H1 (cell line): ENCODE measurements at regions of chr9 and their contacts with region 1.

Region 1: GRCh38 chr9:107425101-107426045 is 64.2 kb downstream of the KLF4 start:
- DNase-seq: peak; percentile 54 to 95
- H3K4me3 ChIP-seq: peak overlapping the region in 1 of 4 experiments; percentile 19; a peak in 3 of 8 replicates
- H3K27ac ChIP-seq: no peak overlapping the region
- H3K4me1 ChIP-seq: no peaks in the 10 kb centered on the region; a peak in 1 of 7 replicates
- H3K27me3 ChIP-seq: peaks cover 0 to 8% (median 7%) of the 10 kb centered on the region in 4 experiments; a peak in 3 of 7 replicates
- CTCF ChIP-seq: peak; percentile 69 to 98 (median 92)
- EP300 ChIP-seq: no peak
- POLR2A ChIP-seq: no peak
- RAD21 ChIP-seq: peak; percentile 59 to 64

Region 2: GRCh38 chr9:107438211-107439090 is 13.1 kb after region 1 on chr9:
- CTCF ChIA-PET with region 1: interaction called, 50 read pairs
- POLR2A ChIA-PET with region 1: interaction called, 6 read pairs
- DNase-seq: peak; percentile 61 to 65
- H3K4me3 ChIP-seq: peak overlapping the region in 2 of 4 experiments; percentile 7 to 28; a peak in 1 of 8 replicates
- H3K27ac ChIP-seq: peak overlapping the region; percentile 87
- H3K4me1 ChIP-seq: peaks cover 6 to 8% (median 7%) of the 10 kb centered on the region in 4 experiments; a peak in 4 of 7 replicates
- H3K27me3 ChIP-seq: no peaks in the 10 kb centered on the region
- CTCF ChIP-seq: no peak
- EP300 ChIP-seq: peak in 1 of 2 experiments; percentile 91; a peak in 1 of 3 replicates
- POLR2A ChIP-seq: peak; percentile 48 to 65; a peak in 2 of 3 replicates
- RAD21 ChIP-seq: no peak

Region 3: GRCh38 chr9:107465467-107466451 is 40.4 kb after region 1 on chr9:
- CTCF ChIA-PET with region 1: interaction called, 33 read pairs
- POLR2A ChIA-PET with region 1: interaction called, 4 read pairs
- DNase-seq: peak in 1 of 2 experiments; percentile 80
- H3K4me3 ChIP-seq: peak overlapping the region; percentile 47 to 75 (median 58)
- H3K27ac ChIP-seq: no peak overlapping the region
- H3K4me1 ChIP-seq: peaks cover 0 to 5% (median 5%) of the 10 kb centered on the region in 4 experiments; a peak in 4 of 7 replicates
- H3K27me3 ChIP-seq: peaks cover 0 to 19% (median 17%) of the 10 kb centered on the region in 4 experiments; a peak in 6 of 7 replicates
- CTCF ChIP-seq: peak; percentile 73 to 79 (median 76)
- EP300 ChIP-seq: no peak
- POLR2A ChIP-seq: no peak
- RAD21 ChIP-seq: peak; percentile 83 to 87

Region 4: DNA sequence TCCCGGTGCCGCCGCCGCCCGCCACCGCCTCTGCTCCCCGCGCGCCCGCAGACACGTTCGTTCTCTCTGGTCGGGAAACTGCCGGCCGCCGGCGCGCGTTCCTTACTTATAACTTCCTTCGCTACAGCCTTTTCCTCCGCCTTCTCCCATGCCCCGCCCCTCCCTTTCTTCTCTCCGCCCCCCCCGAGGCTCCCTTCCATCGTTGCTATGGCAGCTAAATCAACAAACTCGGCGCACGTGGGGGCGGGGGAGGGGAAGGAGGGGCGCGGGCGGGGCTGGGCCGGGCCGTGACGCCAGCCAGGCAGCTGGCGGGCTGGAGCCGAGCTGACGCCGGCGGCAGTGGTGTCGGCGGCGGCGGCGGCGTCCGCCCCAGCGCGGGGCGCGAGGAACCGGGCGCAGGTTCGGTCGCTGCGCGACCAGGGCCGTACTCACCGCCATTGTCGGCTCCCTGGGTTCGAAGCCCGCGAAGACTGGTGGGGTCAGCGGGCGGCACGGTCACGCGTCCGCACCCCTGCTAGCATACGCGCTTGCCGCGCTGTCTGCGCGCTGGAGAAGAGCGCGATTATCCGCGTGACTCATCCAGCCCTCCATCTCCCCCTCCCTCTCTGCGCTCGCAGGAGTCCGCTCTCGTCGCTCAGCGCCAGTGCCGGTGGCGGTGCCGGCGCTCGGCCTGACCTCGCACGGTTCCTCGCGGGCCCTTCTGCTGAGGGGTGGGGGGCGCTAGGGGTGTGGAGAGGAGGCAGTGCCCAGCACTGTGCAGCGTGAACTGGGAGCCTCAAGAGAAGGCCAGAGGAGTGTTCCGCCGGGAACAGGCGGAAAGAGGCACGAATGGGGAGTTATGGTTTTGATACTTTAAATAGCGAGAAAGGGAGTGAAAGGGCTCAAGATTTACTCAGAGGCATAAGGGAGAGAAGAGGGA is 64.6 kb after region 1 on chr9 and contains the start of gene KLF4:
- CTCF ChIA-PET with region 1: interaction called, 23 read pairs
- POLR2A ChIA-PET with region 1: interaction called, 5 read pairs
- DNase-seq: peak; percentile 73 to 84
- H3K4me3 ChIP-seq: peak within 1 kb of the TSS; percentile 50 to 69 (median 60)
- H3K27ac ChIP-seq: 0 out of 2 replicates have a peak within 1 kb of the TSS, but pooled peaks have one; percentile 55
- H3K4me1 ChIP-seq: peaks cover 0 to 22% (median 13%) of the 10 kb centered on the region in 4 experiments; a peak in 6 of 7 replicates
- H3K27me3 ChIP-seq: peaks cover 21 to 55% (median 48%) of the 10 kb centered on the region in 4 experiments
- CTCF ChIP-seq: no peak
- EP300 ChIP-seq: no peak
- POLR2A ChIP-seq: no peak; a peak in 2 of 3 replicates
- RAD21 ChIP-seq: no peak; a peak in 1 of 4 replicates
- total RNA-seq, gene KLF4: 2.8 and 3.1 TPM in 2 replicates

Region 5: GRCh38 chr9:108565651-108566378 is 1140.4 kb after region 1 on chr9:
- CTCF ChIA-PET with region 1: interaction called, 42 read pairs
- POLR2A ChIA-PET with region 1: no interaction called
- DNase-seq: peak in 1 of 2 experiments; percentile 31
- H3K4me3 ChIP-seq: no peak overlapping the region
- H3K27ac ChIP-seq: no peak overlapping the region
- H3K4me1 ChIP-seq: no peaks in the 10 kb centered on the region
- H3K27me3 ChIP-seq: no peaks in the 10 kb centered on the region
- CTCF ChIP-seq: peak; percentile 39 to 87 (median 78)
- EP300 ChIP-seq: no peak
- POLR2A ChIP-seq: no peak
- RAD21 ChIP-seq: peak; percentile 95 to 96